ENCODE measurements at regions of chr11 and their contacts with region 1.

Region 1: GRCh38 chr11:124622531-124623451 is at the start of gene TBRG1:
- DNase-seq: peak; percentile 42
- H3K4me3 ChIP-seq: peak within 1 kb of the TSS; percentile 87
- CTCF ChIP-seq: no peak

Region 2: GRCh38 chr11:124633355-124633754 is 10.6 kb after region 1 on chr11:
- CTCF ChIA-PET with region 1: interaction called, 23 read pairs
- POLR2A ChIA-PET with region 1: no interaction called
- DNase-seq: no peak
- H3K4me3 ChIP-seq: no peak overlapping the region
- CTCF ChIP-seq: peak; percentile 8